ENCODE measurements at regions of chr7 and their contacts with region 1.

Region 1: DNA sequence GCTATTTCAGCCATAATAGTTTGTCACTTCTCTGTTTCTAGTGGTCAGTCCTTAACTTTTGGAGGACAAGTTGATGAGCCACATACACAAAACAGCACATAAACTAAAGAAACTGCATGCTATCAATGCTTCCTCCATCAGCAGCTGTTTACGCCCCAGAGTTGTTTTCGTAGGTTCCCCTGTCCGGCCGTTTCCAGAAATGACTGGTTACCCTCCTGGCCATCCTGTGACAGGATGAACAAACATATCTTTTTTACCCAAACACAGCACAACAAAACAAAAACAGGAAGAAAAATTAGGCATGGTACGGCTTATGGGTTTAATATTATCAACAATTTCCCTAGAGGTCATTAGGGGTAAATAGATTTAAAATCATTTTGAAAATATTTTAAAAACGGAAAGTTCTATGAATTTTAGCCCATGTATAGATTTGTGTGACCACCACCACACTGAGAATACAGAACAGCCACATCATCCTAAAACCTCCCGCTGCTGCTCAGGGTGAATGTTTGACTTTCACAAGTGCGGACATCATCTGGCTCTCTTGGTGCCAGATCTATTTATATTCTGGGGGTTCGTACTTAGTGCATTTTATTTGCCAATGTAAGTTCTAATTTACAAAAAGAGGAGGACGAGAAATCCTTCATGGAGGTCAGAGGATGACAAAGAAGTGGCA is 74.8 kb downstream of the HIPK2 start:
- DNase-seq: no peak
- ATAC-seq: peak; percentile 87
- H3K4me3 ChIP-seq: no peak overlapping the region; the same call in 1 of the 2 replicates
- H3K27ac ChIP-seq: peak overlapping the region; percentile 91
- H3K4me1 ChIP-seq: peaks cover 48% of the 10 kb centered on the region
- H3K27me3 ChIP-seq: no peaks in the 10 kb centered on the region
- CTCF ChIP-seq: no peak
- EP300 ChIP-seq: peak; percentile 46 to 86; a peak in 3 of 4 replicates
- POLR2A ChIP-seq: no peak
- RAD21 ChIP-seq: 0 out of 2 replicates have a peak, but pooled peaks have one; percentile 7

Region 2: DNA sequence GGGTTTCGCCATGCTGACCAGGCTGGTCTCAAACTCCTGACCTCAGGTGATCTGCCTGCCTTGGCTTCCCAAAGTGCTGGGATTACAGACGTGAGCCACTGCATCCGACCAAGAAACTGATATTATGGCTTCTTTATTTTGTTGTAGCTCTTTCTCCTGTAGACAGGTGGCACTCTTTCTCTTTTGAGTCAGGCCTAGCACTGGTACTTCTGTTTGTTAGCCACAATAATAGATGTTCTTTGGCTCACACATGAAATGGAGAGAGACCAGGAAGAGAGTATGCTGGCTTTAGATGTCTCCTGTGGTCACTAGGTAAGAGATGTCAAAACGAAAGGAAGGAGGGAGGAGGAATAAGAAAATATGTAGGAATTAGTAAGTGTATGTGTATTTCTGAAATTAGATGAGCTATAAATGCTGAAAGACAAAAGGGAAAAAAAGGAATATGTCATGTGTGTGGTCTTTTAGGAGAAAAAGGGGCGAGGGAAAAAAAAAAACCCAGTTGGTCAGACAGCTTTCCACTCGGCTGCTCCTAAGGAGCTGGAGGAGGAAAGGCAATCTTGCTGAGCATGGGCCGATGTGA is 100.7 kb before region 1 on chr7:
- CTCF ChIA-PET with region 1: no interaction called
- POLR2A ChIA-PET with region 1: no interaction called
- RAD21 ChIA-PET with region 1: no interaction called
- SMC1A ChIA-PET with region 1: no interaction called
- in situ Hi-C with region 1: no loop called
- intact Hi-C with region 1: no loop called
- DNase-seq: no peak
- ATAC-seq: peak; percentile 87
- H3K4me3 ChIP-seq: no peak overlapping the region
- H3K27ac ChIP-seq: no peak overlapping the region
- H3K4me1 ChIP-seq: no peaks in the 10 kb centered on the region
- H3K27me3 ChIP-seq: no peaks in the 10 kb centered on the region
- CTCF ChIP-seq: peak; percentile 41 to 59 (median 57)
- EP300 ChIP-seq: no peak
- POLR2A ChIP-seq: no peak
- RAD21 ChIP-seq: peak; percentile 56

Region 3: GRCh38 chr7:139680676-139681462 is 22.1 kb before region 1 on chr7:
- CTCF ChIA-PET with region 1: no interaction called
- POLR2A ChIA-PET with region 1: no interaction called
- RAD21 ChIA-PET with region 1: interaction called, 11 read pairs
- SMC1A ChIA-PET with region 1: interaction called, 6 read pairs
- in situ Hi-C with region 1: no loop called
- intact Hi-C with region 1: loop called (anchors 2 kb)
- DNase-seq: no peak
- ATAC-seq: peak; percentile 64
- H3K4me3 ChIP-seq: no peak overlapping the region
- H3K27ac ChIP-seq: peak overlapping the region; percentile 58; the same call in 1 of the 2 replicates
- H3K4me1 ChIP-seq: peaks cover 37% of the 10 kb centered on the region
- H3K27me3 ChIP-seq: no peaks in the 10 kb centered on the region
- CTCF ChIP-seq: no peak
- EP300 ChIP-seq: peak in 1 of 2 experiments; percentile 35; a peak in 1 of 4 replicates
- POLR2A ChIP-seq: no peak
- RAD21 ChIP-seq: no peak

Region 4: GRCh38 chr7:139725077-139725476 is 22.1 kb after region 1 on chr7:
- CTCF ChIA-PET with region 1: no interaction called
- POLR2A ChIA-PET with region 1: no interaction called
- RAD21 ChIA-PET with region 1: no interaction called
- SMC1A ChIA-PET with region 1: no interaction called
- in situ Hi-C with region 1: no loop called
- intact Hi-C with region 1: loop called (anchors 1 kb)
- DNase-seq: peak; percentile 59
- ATAC-seq: peak; percentile 83
- H3K4me3 ChIP-seq: no peak overlapping the region
- H3K27ac ChIP-seq: peak overlapping the region; percentile 39
- H3K4me1 ChIP-seq: peaks cover 25% of the 10 kb centered on the region
- H3K27me3 ChIP-seq: no peaks in the 10 kb centered on the region
- CTCF ChIP-seq: no peak
- EP300 ChIP-seq: peak; percentile 52 to 69; a peak in 3 of 4 replicates
- POLR2A ChIP-seq: no peak
- RAD21 ChIP-seq: no peak

Measured in GM12878 (cell line).